Caco-2 (cell line): ENCODE measurements at regions of chr7 and their contacts with region 1.

Region 1: GRCh38 chr7:51034521-51035264 is 252.0 kb upstream of the GRB10 start:
- DNase-seq: no peak
- H3K4me3 ChIP-seq: no peak overlapping the region
- H3K4me3 Mint-ChIP-seq: no peak overlapping the region
- H3K27ac Mint-ChIP-seq: no peak overlapping the region
- H3K4me1 ChIP-seq: no peaks in the 10 kb centered on the region
- H3K4me1 Mint-ChIP-seq: peaks cover 7% of the 10 kb centered on the region
- H3K27me3 ChIP-seq: no peaks in the 10 kb centered on the region
- H3K27me3 Mint-ChIP-seq: no peaks in the 10 kb centered on the region
- CTCF ChIP-seq: no peak

Region 2: DNA sequence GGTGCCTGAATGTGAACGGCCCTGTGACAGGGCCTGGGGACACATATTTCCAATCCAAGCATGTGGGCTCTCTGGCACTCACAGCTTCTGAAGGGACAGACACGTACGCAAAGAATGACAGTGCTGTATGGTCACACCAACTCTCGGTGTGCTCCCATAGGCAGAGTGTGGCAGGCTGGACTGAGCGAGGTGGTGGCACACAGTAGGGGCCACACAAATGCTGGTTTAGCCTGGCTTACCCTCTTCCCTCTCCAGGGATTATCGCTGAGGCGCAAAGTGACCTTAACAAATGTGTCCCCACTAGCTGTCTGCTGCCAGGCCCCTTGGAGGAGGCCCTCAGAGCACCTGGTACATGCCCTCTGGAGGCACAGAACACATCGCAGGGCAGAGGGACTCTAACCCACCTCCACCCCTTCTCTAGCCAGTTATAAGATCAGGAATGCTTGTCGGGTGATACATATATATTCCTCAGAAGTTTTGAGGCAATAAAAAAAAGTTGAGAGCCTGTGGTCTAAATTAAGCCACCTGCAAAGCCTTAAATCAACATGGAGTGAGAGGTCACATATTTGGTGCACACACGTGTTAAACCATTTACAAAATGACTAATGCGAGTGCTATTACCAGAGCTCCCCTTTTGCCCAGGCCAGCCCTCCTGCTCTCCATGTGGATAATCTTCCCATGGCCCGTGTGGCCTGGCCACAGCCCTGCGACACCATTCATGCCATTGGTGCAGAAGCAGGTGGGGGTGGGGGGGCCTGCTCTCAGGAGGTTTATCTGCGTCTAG is 10.8 kb after region 1 on chr7:
- CTCF ChIA-PET with region 1: no interaction called
- POLR2A ChIA-PET with region 1: no interaction called
- intact Hi-C with region 1: loop called (anchors 1 kb)
- DNase-seq: peak; percentile 78 to 89
- H3K4me3 ChIP-seq: no peak overlapping the region
- H3K4me3 Mint-ChIP-seq: peak overlapping the region; percentile 65
- H3K27ac Mint-ChIP-seq: peak overlapping the region; percentile 97
- H3K4me1 ChIP-seq: peaks cover 32% of the 10 kb centered on the region
- H3K4me1 Mint-ChIP-seq: peaks cover 27% of the 10 kb centered on the region
- H3K27me3 ChIP-seq: no peaks in the 10 kb centered on the region
- H3K27me3 Mint-ChIP-seq: no peaks in the 10 kb centered on the region
- CTCF ChIP-seq: no peak